Esophagus muscularis mucosa (tissue), 4 donors: ENCODE measurements at regions of chr4 and their contacts with region 1.

Region 1: DNA sequence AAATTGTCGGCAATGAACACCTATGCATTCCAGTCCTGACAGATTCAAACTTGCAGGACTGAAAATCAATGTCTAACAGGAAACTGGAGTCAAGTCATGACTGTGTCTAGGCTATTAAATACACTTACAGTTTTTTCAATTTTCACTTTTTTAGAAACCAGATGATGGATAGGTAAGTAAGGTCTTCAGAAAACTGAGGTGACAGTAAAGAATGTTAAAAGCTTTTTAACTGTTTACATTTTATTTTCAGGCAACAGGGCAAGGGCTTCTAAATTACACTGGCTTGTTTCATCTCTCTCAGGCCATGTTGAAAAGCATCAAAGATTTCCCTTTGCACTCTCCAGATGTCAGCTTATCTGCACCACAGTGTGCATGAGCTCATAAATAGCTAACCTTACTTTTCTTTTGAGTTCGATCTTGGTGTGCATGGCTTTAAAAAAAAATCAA is 65.2 kb downstream of the SEC24D start:
- DNase-seq: no peak
- H3K4me3 ChIP-seq: no peak overlapping the region
- H3K27ac ChIP-seq: peak overlapping the region; percentile 76 to 91 (median 82)
- H3K4me1 ChIP-seq: peaks cover 59 to 79% (median 78%) of the 10 kb centered on the region in 4 donors
- H3K27me3 ChIP-seq: no peaks in the 10 kb centered on the region
- CTCF ChIP-seq: no peak
- EP300 ChIP-seq: no peak
- POLR2A ChIP-seq: no peak

Region 2: GRCh38 chr4:118586357-118586790 is 184.4 kb before region 1 on chr4:
- intact Hi-C with region 1: no loop called
- DNase-seq: no peak
- H3K4me3 ChIP-seq: peak overlapping the region in 2 of 4 donors; percentile 6 to 20
- H3K27ac ChIP-seq: peak overlapping the region; percentile 14 to 63 (median 36)
- H3K4me1 ChIP-seq: peaks cover 10 to 16% (median 13%) of the 10 kb centered on the region in 4 donors
- H3K27me3 ChIP-seq: peaks cover 0 to 19% (median 0%) of the 10 kb centered on the region in 4 donors
- CTCF ChIP-seq: no peak
- EP300 ChIP-seq: no peak
- POLR2A ChIP-seq: no peak

Region 3: GRCh38 chr4:118869808-118870342 is 99.1 kb after region 1 on chr4:
- intact Hi-C with region 1: no loop called
- DNase-seq: no peak
- H3K4me3 ChIP-seq: no peak overlapping the region
- H3K27ac ChIP-seq: peak overlapping the region in 3 of 4 donors; percentile 6 to 24 (median 22)
- H3K4me1 ChIP-seq: peaks cover 12 to 22% (median 19%) of the 10 kb centered on the region in 4 donors
- H3K27me3 ChIP-seq: no peaks in the 10 kb centered on the region
- CTCF ChIP-seq: no peak
- EP300 ChIP-seq: no peak
- POLR2A ChIP-seq: no peak

Region 4: DNA sequence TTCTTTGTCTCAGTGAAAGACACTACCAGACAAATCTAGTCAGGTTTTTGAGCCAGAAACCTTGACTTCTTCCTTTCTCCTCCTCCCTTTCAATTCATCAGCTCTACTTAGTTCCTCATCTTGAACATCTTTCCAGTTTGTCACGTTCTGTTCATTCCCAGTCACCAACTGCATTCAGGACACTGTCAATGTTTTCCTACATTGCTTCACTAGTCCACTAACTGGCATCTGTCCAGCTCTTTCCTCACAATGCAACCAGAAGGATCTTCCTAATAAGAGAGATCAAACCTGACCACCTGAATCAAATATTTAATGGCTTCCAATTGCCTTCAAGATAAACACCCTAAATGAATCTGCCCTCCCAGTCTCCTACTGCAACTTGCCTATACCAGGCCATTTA is 170.4 kb after region 1 on chr4:
- intact Hi-C with region 1: no loop called
- DNase-seq: no peak
- H3K4me3 ChIP-seq: peak overlapping the region in 3 of 4 donors; percentile 17 to 47 (median 18)
- H3K27ac ChIP-seq: peak overlapping the region; percentile 83 to 87 (median 86)
- H3K4me1 ChIP-seq: peaks cover 32 to 97% (median 96%) of the 10 kb centered on the region in 4 donors
- H3K27me3 ChIP-seq: no peaks in the 10 kb centered on the region
- CTCF ChIP-seq: no peak
- EP300 ChIP-seq: no peak
- POLR2A ChIP-seq: no peak

Region 5: GRCh38 chr4:118968005-118968404 is 197.2 kb after region 1 on chr4:
- intact Hi-C with region 1: loop called (anchors 2 kb)
- DNase-seq: peak; percentile 92
- H3K4me3 ChIP-seq: peak overlapping the region; percentile 1 to 26 (median 14)
- H3K27ac ChIP-seq: peak overlapping the region; percentile 79 to 88 (median 84)
- H3K4me1 ChIP-seq: peaks cover 65 to 98% (median 90%) of the 10 kb centered on the region in 4 donors
- H3K27me3 ChIP-seq: no peaks in the 10 kb centered on the region
- CTCF ChIP-seq: no peak
- EP300 ChIP-seq: no peak
- POLR2A ChIP-seq: no peak

Region 6: GRCh38 chr4:119010909-119011606 is 240.3 kb after region 1 on chr4:
- intact Hi-C with region 1: no loop called
- DNase-seq: no peak
- H3K4me3 ChIP-seq: no peak overlapping the region
- H3K27ac ChIP-seq: peak overlapping the region; percentile 83 to 98 (median 94)
- H3K4me1 ChIP-seq: peaks cover 32 to 91% (median 72%) of the 10 kb centered on the region in 4 donors
- H3K27me3 ChIP-seq: no peaks in the 10 kb centered on the region
- CTCF ChIP-seq: no peak
- EP300 ChIP-seq: peak; percentile 71
- POLR2A ChIP-seq: peak; percentile 33